ENCODE measurements at regions of chr7 and their contacts with region 1.

Region 1: DNA sequence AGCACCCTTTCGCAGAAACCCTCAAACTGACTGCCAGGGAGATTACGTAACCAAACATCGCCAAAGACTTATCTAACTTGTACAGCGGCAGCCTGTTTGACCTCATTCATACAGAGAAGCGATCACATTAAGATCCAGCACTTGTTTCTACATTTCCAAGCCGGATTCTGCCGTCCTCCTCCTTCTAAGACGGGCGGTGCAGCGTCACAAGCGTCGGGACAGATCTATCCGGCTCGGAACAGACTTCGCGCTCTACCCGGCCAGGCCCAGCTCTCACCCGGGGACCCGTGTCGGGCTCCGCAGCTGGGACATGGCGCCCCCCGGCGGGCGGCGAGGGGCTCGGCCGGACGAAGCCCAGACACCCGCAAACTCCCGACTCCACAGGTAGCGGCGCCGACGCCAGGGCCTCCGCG is 373 bp downstream of the H2AZ2 start:
- DNase-seq: peak; percentile 88
- CTCF ChIP-seq: peak; percentile 96

Region 2: DNA sequence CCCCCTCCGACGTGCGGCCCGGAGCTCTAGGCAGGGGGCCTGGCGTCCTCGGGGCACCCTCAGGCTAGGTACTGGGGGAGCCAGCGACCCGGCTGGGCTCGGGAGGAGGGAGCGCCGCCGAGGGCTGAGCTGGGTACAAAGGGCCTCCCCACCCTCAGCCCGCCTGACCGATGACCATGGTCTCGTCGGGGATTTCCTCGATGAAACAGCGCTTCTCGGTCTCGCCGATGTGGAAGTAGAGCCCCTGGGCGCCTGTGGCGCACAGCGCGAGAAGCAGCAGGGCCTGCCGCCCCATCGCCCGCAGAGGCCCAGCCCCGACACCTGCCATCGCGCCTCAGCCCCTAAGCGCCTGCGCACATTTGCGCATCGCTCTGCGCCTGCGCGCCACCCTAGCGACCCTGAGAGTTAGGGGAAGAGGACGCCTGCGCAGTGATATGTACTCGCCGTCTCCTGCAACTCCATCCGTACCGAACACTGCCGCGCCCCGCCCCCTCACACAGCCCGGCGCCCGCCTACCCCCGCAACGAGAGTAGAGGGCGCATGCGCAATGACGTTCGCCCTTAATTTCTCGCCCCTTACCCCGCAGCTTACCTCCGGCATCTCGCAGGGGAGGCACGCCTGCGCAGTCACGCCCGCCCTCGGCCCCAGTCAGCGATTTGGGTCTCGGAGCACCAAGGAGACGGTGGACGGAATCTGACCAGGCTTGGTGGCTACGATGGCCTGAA is 265.5 kb before region 1 on chr7 and contains the start of gene TMED4:
- in situ Hi-C with region 1: loop called (anchors 10 kb)
- DNase-seq: peak; percentile 100
- CTCF ChIP-seq: no peak

Measured in GM13977 (cell line).